HCT116 (cell line): ENCODE measurements at regions of chr15 and their contacts with region 1.

Region 1: GRCh38 chr15:33700695-33701304 is 267.5 kb upstream of the CHRM5 start:
- DNase-seq: peak; percentile 67
- ATAC-seq: peak; percentile 97
- H3K4me3 ChIP-seq: no peak overlapping the region
- H3K27ac ChIP-seq: no peak overlapping the region
- H3K4me1 ChIP-seq: peaks cover 0 to 3% of the 10 kb centered on the region in 2 experiments; a peak in 1 of 4 replicates
- H3K27me3 ChIP-seq: peaks cover 32% of the 10 kb centered on the region; the same call in 1 of the 2 replicates
- CTCF ChIP-seq: peak; percentile 43 to 94 (median 91)
- POLR2A ChIP-seq: no peak
- RAD21 ChIP-seq: peak; percentile 66

Region 2: GRCh38 chr15:33086507-33087121 is 614.2 kb before region 1 on chr15:
- CTCF ChIA-PET with region 1: interaction called, 5 read pairs
- POLR2A ChIA-PET with region 1: no interaction called
- RAD21 ChIA-PET with region 1: interaction called in 1 of 2 experiments, 4 read pairs
- intact Hi-C with region 1: loop called (anchors 10 kb)
- DNase-seq: peak; percentile 42
- ATAC-seq: peak; percentile 74
- H3K4me3 ChIP-seq: no peak overlapping the region
- H3K27ac ChIP-seq: no peak overlapping the region
- H3K4me1 ChIP-seq: peaks cover 13 to 21% of the 10 kb centered on the region in 2 experiments
- H3K27me3 ChIP-seq: no peaks in the 10 kb centered on the region
- CTCF ChIP-seq: peak; percentile 44 to 72 (median 53); a peak in 5 of 6 replicates
- POLR2A ChIP-seq: no peak
- RAD21 ChIP-seq: peak; percentile 70

Region 3: GRCh38 chr15:33226559-33227181 is 474.1 kb before region 1 on chr15:
- CTCF ChIA-PET with region 1: interaction called, 12 read pairs
- POLR2A ChIA-PET with region 1: no interaction called
- RAD21 ChIA-PET with region 1: no interaction called
- intact Hi-C with region 1: no loop called
- DNase-seq: peak; percentile 70
- ATAC-seq: peak; percentile 96
- H3K4me3 ChIP-seq: no peak overlapping the region
- H3K27ac ChIP-seq: no peak overlapping the region
- H3K4me1 ChIP-seq: no peaks in the 10 kb centered on the region
- H3K27me3 ChIP-seq: no peaks in the 10 kb centered on the region
- CTCF ChIP-seq: peak; percentile 12 to 69 (median 58); a peak in 4 of 6 replicates
- POLR2A ChIP-seq: no peak
- RAD21 ChIP-seq: peak; percentile 27; the same call in 1 of the 2 replicates

Region 4: GRCh38 chr15:33242669-33243191 is 458.1 kb before region 1 on chr15:
- CTCF ChIA-PET with region 1: interaction called, 37 read pairs
- POLR2A ChIA-PET with region 1: no interaction called
- RAD21 ChIA-PET with region 1: no interaction called
- intact Hi-C with region 1: no loop called
- DNase-seq: no peak
- ATAC-seq: peak; percentile 74
- H3K4me3 ChIP-seq: no peak overlapping the region
- H3K27ac ChIP-seq: no peak overlapping the region
- H3K4me1 ChIP-seq: peaks cover 0 to 30% of the 10 kb centered on the region in 2 experiments; a peak in 3 of 4 replicates
- H3K27me3 ChIP-seq: peaks cover 3% of the 10 kb centered on the region; the same call in 1 of the 2 replicates
- CTCF ChIP-seq: peak; percentile 28 to 77 (median 66); a peak in 5 of 6 replicates
- POLR2A ChIP-seq: no peak
- RAD21 ChIP-seq: peak; percentile 50; the same call in 1 of the 2 replicates

Region 5: GRCh38 chr15:33292717-33293307 is 408.0 kb before region 1 on chr15:
- CTCF ChIA-PET with region 1: interaction called, 177 read pairs
- POLR2A ChIA-PET with region 1: interaction called, 7 read pairs
- RAD21 ChIA-PET with region 1: interaction called, 14 to 20 read pairs
- intact Hi-C with region 1: loop called (anchors 1 kb)
- DNase-seq: peak; percentile 51
- ATAC-seq: peak; percentile 92
- H3K4me3 ChIP-seq: no peak overlapping the region
- H3K27ac ChIP-seq: no peak overlapping the region
- H3K4me1 ChIP-seq: peaks cover 0 to 5% of the 10 kb centered on the region in 2 experiments; a peak in 1 of 4 replicates
- H3K27me3 ChIP-seq: peaks cover 31% of the 10 kb centered on the region
- CTCF ChIP-seq: peak; percentile 39 to 89 (median 57); a peak in 5 of 6 replicates
- POLR2A ChIP-seq: no peak
- RAD21 ChIP-seq: peak; percentile 67

Region 6: DNA sequence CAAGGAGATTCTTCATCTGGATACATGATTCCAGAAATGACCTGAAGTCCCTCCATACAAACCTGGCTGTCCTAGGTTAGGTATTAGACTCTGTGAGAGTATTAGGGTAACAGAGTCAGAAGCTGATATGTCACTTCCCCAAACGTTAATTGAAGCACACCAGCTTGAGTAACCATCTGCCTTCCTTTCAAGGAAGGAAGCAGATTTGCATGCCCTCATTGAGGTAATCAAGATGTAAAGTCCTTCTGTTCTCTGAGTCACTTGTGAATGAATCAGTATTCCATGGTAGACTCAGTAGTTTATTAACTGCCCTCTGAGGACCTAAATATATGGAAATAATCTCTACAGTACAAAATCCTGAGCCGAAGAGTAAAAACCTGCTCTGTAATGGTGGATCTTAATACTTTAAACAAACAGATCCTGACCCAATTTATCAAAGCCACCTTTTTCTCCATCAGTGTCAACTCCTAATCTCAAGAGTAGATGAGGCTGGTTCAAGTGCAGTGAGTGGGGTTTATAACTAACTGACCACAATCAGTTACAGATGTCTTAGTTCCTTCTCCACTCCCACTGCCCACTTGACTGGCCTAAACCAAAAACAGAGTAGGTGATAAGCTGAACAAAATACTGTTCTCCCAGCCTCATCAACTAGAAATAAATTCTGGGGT is 21.3 kb after region 1 on chr15:
- CTCF ChIA-PET with region 1: interaction called, 23 read pairs
- POLR2A ChIA-PET with region 1: no interaction called
- RAD21 ChIA-PET with region 1: no interaction called
- intact Hi-C with region 1: no loop called
- DNase-seq: no peak
- ATAC-seq: no peak
- H3K4me3 ChIP-seq: no peak overlapping the region
- H3K27ac ChIP-seq: no peak overlapping the region
- H3K4me1 ChIP-seq: peaks cover 0 to 7% of the 10 kb centered on the region in 2 experiments; a peak in 1 of 4 replicates
- H3K27me3 ChIP-seq: 0 out of 2 replicates have a peak, but pooled peaks cover 3% of the 10 kb centered on the region
- CTCF ChIP-seq: no peak
- POLR2A ChIP-seq: no peak
- RAD21 ChIP-seq: no peak

Region 7: DNA sequence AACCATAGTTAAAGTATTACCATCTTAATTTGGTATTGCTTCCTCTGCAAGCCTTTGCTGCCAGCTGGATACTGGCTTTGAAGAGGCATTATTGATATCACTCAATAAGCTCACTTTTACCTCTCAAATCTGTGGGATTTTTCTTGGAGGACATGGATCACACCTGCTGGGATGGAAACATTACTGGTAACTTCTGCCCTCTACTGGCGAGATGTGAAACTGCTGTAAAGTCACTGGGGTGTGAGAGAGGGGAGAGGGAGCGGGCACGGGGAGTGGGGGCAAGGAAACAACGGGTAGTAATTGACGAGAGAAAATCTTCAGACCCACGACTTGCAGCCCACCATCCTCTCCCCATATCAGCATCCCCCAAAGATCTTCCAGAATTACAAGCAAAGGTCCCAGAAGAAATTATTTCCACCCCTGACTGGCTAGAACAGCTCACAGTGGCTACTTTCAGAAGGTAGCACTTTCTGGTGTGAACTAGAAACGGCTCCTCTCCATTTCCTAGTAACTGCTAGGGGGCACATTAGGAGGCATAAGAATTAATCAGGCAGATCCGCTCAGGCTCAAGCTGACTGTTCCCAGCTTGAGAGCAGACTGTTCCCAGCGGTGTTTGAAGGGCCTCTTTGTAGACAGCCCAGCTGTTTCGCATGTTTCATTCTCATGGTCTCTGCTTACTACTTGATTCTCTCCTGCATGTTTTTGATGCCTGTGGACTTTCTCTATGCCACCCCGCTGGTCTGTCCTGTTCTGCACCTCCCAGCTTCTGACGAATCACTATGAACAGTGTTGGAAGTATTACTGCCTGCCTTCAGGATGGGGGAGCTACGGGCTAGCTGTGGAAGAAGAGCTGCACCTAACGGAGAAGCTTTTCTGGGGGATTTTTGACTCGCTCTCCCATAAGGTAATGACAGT is 37.1 kb after region 1 on chr15:
- CTCF ChIA-PET with region 1: interaction called, 15 read pairs
- POLR2A ChIA-PET with region 1: no interaction called
- RAD21 ChIA-PET with region 1: interaction called in 1 of 2 experiments, 3 read pairs
- intact Hi-C with region 1: no loop called
- DNase-seq: peak; percentile 16
- ATAC-seq: peak; percentile 89
- H3K4me3 ChIP-seq: no peak overlapping the region
- H3K27ac ChIP-seq: no peak overlapping the region
- H3K4me1 ChIP-seq: no peaks in the 10 kb centered on the region
- H3K27me3 ChIP-seq: 0 out of 2 replicates have a peak, but pooled peaks cover 7% of the 10 kb centered on the region
- CTCF ChIP-seq: peak; percentile 35 to 84 (median 83); a peak in 5 of 6 replicates
- POLR2A ChIP-seq: no peak
- RAD21 ChIP-seq: peak; percentile 27

Region 8: GRCh38 chr15:33852557-33852956 is 151.8 kb after region 1 on chr15:
- CTCF ChIA-PET with region 1: no interaction called
- POLR2A ChIA-PET with region 1: no interaction called
- RAD21 ChIA-PET with region 1: no interaction called
- intact Hi-C with region 1: no loop called
- DNase-seq: no peak
- ATAC-seq: peak; percentile 61
- H3K4me3 ChIP-seq: no peak overlapping the region
- H3K27ac ChIP-seq: no peak overlapping the region
- H3K4me1 ChIP-seq: peaks cover 0 to 8% of the 10 kb centered on the region in 2 experiments; a peak in 1 of 4 replicates
- H3K27me3 ChIP-seq: no peaks in the 10 kb centered on the region
- CTCF ChIP-seq: no peak
- POLR2A ChIP-seq: no peak
- RAD21 ChIP-seq: no peak